Activated CD4-positive, alpha-beta T cell treated with anti-CD3 and anti-CD28 coated beads for 36 hours (primary cell): ENCODE measurements at regions of chr11 and their contacts with region 1.

Region 1: GRCh38 chr11:10933455-10934292 is 75.8 kb upstream of the ZBED5 start:
- DNase-seq: peak; percentile 91
- ATAC-seq: peak; percentile 91
- H3K4me3 Mint-ChIP-seq: peak overlapping the region; percentile 65
- H3K27ac Mint-ChIP-seq: peak overlapping the region; percentile 16
- H3K4me1 Mint-ChIP-seq: peaks cover 9% of the 10 kb centered on the region
- H3K27me3 Mint-ChIP-seq: peaks cover 27% of the 10 kb centered on the region

Region 2: DNA sequence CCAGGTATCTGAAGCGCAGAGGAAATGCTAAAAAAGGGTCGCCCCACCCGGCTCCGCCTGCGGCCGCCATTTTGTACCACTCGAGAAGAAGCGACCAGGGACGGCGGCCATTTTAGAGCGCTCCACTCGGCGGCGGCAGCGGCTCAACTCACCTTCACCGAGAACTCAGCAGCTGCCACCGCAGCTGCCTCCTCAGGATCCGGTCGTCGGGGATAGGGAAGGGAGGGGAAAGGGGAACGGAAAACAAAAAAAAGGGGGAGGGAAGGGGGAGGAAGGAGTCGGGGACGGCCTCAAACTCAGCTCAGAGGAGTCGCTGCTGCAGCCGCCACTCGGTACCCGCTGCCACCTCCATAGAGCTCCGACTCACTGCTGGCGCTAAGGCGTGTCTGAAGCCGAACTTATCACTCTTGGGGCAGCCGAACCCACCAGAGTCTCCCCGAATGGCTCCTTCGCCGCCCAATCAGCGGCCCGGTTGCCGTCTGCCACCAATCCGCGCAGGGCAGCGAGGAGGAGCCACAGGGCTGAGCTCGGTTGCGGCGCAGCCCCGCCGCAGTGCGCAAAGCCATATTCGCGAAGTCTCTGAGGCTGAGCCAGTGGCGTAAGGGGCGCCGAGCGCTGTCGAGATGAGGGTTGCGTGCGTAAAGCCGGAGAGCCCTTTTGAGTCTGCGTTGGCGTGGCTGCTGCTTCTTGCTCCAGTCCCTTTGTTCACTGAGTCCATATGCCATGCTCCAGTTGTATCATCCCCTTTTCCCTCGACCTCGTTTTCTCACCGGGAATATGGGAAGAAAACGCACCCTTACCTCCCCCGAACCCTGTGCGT is 124.9 kb before region 1 on chr11 and contains the start of gene EIF4G2:
- CTCF ChIA-PET with region 1: interaction called, 10 read pairs
- POLR2A ChIA-PET with region 1: interaction called, 9 read pairs
- intact Hi-C with region 1: loop called in 1 of 2 experiments (anchors 1 kb)
- DNase-seq: peak; percentile 98
- ATAC-seq: peak; percentile 96
- H3K4me3 Mint-ChIP-seq: peak within 1 kb of the TSS; percentile 93
- H3K27ac Mint-ChIP-seq: peak within 1 kb of the TSS; percentile 96
- H3K4me1 Mint-ChIP-seq: peaks cover 42% of the 10 kb centered on the region
- H3K27me3 Mint-ChIP-seq: peaks cover 2% of the 10 kb centered on the region
- total RNA-seq, gene EIF4G2: 953 to 1,693 TPM

Region 3: GRCh38 chr11:10943968-10944367 is 10.3 kb after region 1 on chr11:
- CTCF ChIA-PET with region 1: interaction called, 34 read pairs
- POLR2A ChIA-PET with region 1: no interaction called
- intact Hi-C with region 1: no loop called
- DNase-seq: no peak
- ATAC-seq: no peak
- H3K4me3 Mint-ChIP-seq: no peak overlapping the region
- H3K27ac Mint-ChIP-seq: no peak overlapping the region
- H3K4me1 Mint-ChIP-seq: peaks cover 4% of the 10 kb centered on the region
- H3K27me3 Mint-ChIP-seq: peaks cover 3% of the 10 kb centered on the region

Region 4: DNA sequence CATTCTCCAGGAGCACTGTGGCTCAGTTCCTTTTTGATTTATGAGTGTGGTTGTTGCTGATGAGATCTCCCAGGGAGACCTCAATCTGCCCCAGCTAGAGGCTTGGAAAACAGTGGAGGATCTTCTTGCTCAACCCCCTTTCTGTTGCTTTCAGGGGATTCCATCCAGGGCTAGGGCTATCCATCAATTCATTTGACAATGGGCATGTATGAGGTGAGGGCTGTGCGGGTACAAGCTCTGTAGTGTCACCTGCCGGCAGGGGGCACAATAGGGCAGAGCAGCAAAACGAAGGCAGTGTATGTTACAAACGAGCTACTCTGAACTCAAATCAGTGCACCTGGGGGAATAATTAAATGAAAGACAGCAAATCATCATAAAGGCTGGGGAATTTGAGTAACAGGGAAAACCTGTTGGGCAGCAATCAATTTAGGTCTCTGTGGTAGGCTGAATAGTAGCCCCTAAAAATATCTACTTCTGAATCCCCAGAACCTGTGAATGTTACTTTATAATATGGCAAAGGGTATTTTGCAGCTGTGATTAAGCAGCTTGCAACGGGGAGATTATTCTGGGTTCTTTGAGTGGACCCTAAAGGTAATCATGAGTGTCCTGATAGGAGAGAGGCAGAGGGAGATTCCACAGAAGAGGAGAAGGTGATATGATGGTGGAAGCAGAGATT is 94.5 kb after region 1 on chr11:
- CTCF ChIA-PET with region 1: interaction called, 51 read pairs
- POLR2A ChIA-PET with region 1: no interaction called
- intact Hi-C with region 1: no loop called
- DNase-seq: peak; percentile 88
- ATAC-seq: peak; percentile 91
- H3K4me3 Mint-ChIP-seq: no peak overlapping the region
- H3K27ac Mint-ChIP-seq: no peak overlapping the region
- H3K4me1 Mint-ChIP-seq: no peaks in the 10 kb centered on the region
- H3K27me3 Mint-ChIP-seq: no peaks in the 10 kb centered on the region

Region 5: GRCh38 chr11:11265994-11266606 is 332.4 kb after region 1 on chr11:
- CTCF ChIA-PET with region 1: interaction called, 3 read pairs
- POLR2A ChIA-PET with region 1: no interaction called
- intact Hi-C with region 1: loop called in 1 of 2 experiments (anchors 2 kb)
- DNase-seq: peak; percentile 83
- ATAC-seq: peak; percentile 68
- H3K4me3 Mint-ChIP-seq: no peak overlapping the region
- H3K27ac Mint-ChIP-seq: no peak overlapping the region
- H3K4me1 Mint-ChIP-seq: no peaks in the 10 kb centered on the region
- H3K27me3 Mint-ChIP-seq: peaks cover 2% of the 10 kb centered on the region

Region 6: DNA sequence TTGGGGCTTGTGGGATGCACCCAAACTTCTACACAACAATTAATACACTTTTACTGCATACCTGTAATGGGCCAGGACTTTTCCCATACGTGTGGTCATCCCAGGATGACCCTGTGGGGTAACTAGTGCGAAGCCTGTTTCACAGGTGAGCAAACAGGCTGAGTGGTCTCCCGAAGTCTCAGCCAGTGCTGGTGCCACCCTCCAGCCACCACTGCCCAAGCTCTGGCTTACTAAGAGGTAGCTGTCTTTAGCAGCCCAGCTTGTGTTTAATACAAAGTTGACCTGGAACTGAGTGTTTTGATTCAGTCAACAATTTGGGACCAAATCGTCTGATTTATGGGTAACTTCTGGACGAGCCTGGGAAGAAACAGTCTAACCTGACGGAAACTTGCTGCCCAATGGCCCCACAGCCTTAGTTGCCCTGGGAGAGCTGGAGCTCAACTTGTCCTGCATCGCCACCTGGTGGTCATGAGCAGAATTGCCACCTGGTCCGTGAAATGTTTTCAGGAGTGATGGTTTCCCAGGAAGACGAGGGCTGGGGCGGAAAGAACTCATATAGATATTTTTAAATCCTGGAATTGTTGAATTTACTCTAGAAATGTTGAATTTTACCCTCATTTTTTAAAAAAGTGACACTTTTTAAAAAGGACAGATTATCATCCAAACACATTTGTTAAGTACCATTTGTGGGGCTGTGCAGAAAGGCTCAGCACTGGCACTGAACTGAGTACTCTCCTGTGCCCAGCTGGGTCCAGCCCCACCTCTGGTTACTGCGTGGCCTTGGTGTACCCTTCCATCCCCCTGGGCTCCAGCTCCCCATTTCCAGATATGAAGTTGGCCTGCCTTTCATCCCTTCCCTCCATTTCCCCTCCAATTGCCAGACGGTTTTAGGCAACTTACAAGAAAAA is 1348.2 kb after region 1 on chr11:
- CTCF ChIA-PET with region 1: no interaction called
- POLR2A ChIA-PET with region 1: no interaction called
- intact Hi-C with region 1: loop called in 1 of 2 experiments (anchors 10 kb)
- DNase-seq: peak; percentile 89
- ATAC-seq: peak; percentile 76
- H3K4me3 Mint-ChIP-seq: no peak overlapping the region
- H3K27ac Mint-ChIP-seq: peak overlapping the region; percentile 14
- H3K4me1 Mint-ChIP-seq: peaks cover 18% of the 10 kb centered on the region
- H3K27me3 Mint-ChIP-seq: no peaks in the 10 kb centered on the region